ENCODE measurements at regions of chr14 and their contacts with region 1.

Region 1: DNA sequence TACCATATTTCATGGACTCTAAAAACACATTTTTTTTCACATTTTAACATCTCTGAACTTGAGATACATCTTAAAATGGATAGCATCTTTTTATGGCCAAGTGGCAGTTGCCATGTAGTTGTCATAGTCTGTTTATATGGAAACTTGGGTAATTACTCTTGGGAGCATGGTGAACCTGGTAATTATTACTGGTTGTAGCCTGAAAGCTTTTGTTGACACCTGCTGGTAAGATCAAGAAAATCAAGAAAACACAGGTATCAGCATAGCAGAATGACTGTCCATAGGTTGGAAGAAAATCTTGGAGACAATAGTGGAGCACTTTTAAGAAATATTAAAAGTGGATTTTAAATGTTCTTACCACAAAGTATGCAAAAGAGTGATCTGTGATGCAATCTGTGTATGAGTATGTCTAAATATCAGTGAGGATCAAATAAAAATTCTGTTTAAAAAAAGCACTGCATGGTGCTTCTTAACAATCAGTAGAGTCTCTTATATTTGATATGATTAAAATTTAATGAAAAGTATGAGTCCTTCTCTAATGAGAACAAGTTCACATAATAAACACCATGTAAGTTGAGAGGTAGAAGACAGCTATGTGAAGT is 44.2 kb downstream of the TTC8 start:
- DNase-seq: no peak

Region 2: DNA sequence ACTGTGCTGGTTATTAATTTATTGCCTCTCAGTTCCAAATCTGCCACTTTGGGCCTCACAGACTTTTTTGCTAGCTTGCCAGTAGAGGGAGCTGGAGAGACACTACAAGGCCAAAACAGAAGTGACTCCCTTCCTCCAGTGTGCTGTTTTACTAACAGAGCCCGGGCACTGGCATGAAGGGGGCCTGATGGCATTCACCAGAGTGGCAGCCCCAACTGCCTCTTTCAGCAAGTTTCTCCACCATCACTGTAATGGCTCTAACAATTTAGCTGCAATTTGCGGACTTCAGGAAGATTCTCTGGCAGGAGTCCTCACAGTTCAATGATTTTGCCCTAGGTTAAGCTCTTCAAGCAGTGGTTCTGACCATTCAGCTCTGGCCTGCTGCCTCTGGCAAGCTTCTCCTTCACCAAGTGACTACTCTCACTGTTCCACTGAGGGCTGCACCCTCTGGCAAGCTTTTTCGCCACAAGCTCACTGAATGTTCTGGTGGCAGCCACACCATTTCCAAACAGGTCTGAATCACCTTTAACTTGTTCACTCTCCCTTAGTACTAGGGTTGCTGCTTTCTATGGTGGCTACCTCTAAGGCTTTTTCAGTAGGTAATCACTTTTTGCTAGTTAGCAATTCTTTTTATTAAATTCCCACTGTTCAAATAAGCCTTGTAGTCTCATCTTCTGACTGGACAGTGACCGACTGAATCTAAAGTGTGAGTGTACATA is 200.9 kb before region 1 on chr14:
- intact Hi-C with region 1: loop called in 1 of 2 experiments (anchors 10 kb)
- DNase-seq: no peak

Region 3: DNA sequence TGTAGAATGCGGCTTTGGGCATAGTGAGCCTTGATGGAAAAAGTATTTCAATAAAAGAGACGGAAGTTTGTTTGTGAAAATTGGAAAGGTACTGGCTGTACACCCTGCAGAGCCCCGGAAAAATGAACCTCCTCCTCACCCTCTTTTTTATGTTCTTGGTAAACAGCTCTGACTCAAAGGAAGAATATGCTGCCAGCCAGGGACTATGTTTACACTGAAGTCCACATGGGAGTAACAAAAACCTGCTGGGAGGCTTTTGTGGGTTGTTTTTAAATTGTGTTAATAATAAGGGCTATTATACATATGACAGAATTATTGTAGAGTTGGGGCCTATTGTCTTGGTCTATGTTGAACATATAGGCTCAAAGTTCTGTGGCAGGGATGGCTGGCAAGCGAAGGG is 26.5 kb after region 1 on chr14:
- intact Hi-C with region 1: no loop called
- DNase-seq: no peak